MCF 10A (cell line): ENCODE measurements at regions of chr11 and their contacts with region 1.

Region 1: GRCh38 chr11:6251120-6251733 is 8.4 kb upstream of the CCKBR start:
- DNase-seq: peak; percentile 74
- H3K4me3 Mint-ChIP-seq: no peak overlapping the region
- H3K27ac Mint-ChIP-seq: no peak overlapping the region
- H3K4me1 Mint-ChIP-seq: peaks cover 16% of the 10 kb centered on the region
- H3K27me3 Mint-ChIP-seq: no peaks in the 10 kb centered on the region
- CTCF ChIP-seq: peak; percentile 87

Region 2: DNA sequence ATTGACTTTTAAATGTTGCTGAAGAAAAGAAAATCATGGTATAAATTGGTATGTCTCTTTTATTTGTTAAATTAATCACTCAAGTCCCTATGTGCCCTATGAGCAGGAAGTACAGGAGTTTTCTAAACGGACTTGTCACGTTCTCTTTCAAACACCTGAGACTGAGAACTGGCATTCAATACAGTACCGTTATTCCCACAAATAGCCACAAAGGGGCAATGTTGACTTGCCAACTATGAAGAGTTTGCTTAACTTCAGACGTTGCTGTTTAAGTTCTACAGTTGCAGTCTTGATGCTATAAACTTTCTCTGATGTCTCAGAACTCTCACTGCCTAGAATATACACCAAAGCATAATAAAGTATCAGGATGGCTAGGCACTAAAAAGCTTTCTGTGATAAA is 228.3 kb before region 1 on chr11:
- CTCF ChIA-PET with region 1: interaction called, 11 read pairs
- POLR2A ChIA-PET with region 1: no interaction called
- intact Hi-C with region 1: no loop called
- DNase-seq: peak; percentile 61
- H3K4me3 Mint-ChIP-seq: no peak overlapping the region
- H3K27ac Mint-ChIP-seq: no peak overlapping the region
- H3K4me1 Mint-ChIP-seq: no peaks in the 10 kb centered on the region
- H3K27me3 Mint-ChIP-seq: peaks cover 33% of the 10 kb centered on the region
- CTCF ChIP-seq: peak; percentile 56

Region 3: GRCh38 chr11:6234387-6235107 is 16.7 kb before region 1 on chr11 and contains the start of gene FHIP1B:
- CTCF ChIA-PET with region 1: interaction called, 50 read pairs
- POLR2A ChIA-PET with region 1: interaction called, 31 read pairs
- intact Hi-C with region 1: loop called (anchors 2 kb)
- DNase-seq: peak; percentile 100
- H3K4me3 Mint-ChIP-seq: peak within 1 kb of the TSS; percentile 94
- H3K27ac Mint-ChIP-seq: peak within 1 kb of the TSS; percentile 93
- H3K4me1 Mint-ChIP-seq: peaks cover 26% of the 10 kb centered on the region
- H3K27me3 Mint-ChIP-seq: no peaks in the 10 kb centered on the region
- CTCF ChIP-seq: no peak
- total RNA-seq, gene FHIP1B: 44.6 and 51.1 TPM in 2 replicates

Region 4: DNA sequence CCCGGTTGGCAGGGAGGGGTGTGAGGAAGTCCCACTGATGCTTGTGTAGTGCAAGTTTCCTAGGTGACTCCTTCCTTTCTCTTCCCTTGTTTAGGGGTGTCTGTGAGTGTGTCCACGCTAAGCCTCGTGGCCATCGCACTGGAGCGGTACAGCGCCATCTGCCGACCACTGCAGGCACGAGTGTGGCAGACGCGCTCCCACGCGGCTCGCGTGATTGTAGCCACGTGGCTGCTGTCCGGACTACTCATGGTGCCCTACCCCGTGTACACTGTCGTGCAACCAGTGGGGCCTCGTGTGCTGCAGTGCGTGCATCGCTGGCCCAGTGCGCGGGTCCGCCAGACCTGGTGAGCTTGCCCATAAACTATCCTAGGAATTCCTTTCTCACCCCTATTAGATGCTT is 18.8 kb after region 1 on chr11:
- CTCF ChIA-PET with region 1: interaction called, 33 read pairs
- POLR2A ChIA-PET with region 1: no interaction called
- intact Hi-C with region 1: no loop called
- DNase-seq: no peak
- H3K4me3 Mint-ChIP-seq: no peak overlapping the region
- H3K27ac Mint-ChIP-seq: no peak overlapping the region
- H3K4me1 Mint-ChIP-seq: no peaks in the 10 kb centered on the region
- H3K27me3 Mint-ChIP-seq: peaks cover 21% of the 10 kb centered on the region
- CTCF ChIP-seq: no peak

Region 5: GRCh38 chr11:6298605-6299004 is 47.4 kb after region 1 on chr11:
- CTCF ChIA-PET with region 1: interaction called, 72 read pairs
- POLR2A ChIA-PET with region 1: interaction called, 3 read pairs
- intact Hi-C with region 1: loop called (anchors 1 kb)
- DNase-seq: peak; percentile 55
- H3K4me3 Mint-ChIP-seq: no peak overlapping the region
- H3K27ac Mint-ChIP-seq: no peak overlapping the region
- H3K4me1 Mint-ChIP-seq: no peaks in the 10 kb centered on the region
- H3K27me3 Mint-ChIP-seq: no peaks in the 10 kb centered on the region
- CTCF ChIP-seq: peak; percentile 54

Region 6: DNA sequence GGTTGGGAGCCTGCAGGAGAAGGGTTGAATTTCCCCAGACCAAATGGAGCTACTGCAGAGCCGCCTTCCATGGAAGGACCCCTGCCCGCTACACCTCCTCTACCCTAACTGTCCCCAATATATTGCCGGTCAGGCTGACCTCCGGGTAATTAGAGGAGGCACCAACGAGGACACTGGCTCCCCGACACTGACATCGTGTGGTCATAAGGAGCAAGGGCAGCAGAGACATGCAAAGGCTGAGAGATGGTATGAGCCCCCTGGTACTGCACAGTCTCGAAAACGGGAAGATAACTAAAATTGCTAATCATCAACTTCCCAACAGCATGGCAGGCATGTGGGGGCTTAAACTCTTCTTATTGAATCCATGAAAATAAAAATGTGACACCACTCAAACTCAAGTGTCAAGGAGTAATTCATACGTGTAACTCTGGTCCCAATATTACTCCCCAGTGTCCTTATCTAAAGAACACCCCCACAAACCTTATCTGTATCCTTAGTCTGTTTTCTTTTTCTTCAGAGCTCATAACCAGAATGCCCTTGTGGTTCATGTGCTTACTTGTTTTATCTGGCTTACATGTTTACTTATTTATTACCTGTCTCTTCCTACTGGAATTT is 64.7 kb after region 1 on chr11:
- CTCF ChIA-PET with region 1: interaction called, 185 read pairs
- POLR2A ChIA-PET with region 1: interaction called, 25 read pairs
- intact Hi-C with region 1: loop called (anchors 2 kb)
- DNase-seq: peak; percentile 73
- H3K4me3 Mint-ChIP-seq: no peak overlapping the region
- H3K27ac Mint-ChIP-seq: no peak overlapping the region
- H3K4me1 Mint-ChIP-seq: peaks cover 18% of the 10 kb centered on the region
- H3K27me3 Mint-ChIP-seq: no peaks in the 10 kb centered on the region
- CTCF ChIP-seq: peak; percentile 80